ENCODE measurements at regions of chr20 and their contacts with region 1.

Region 1: DNA sequence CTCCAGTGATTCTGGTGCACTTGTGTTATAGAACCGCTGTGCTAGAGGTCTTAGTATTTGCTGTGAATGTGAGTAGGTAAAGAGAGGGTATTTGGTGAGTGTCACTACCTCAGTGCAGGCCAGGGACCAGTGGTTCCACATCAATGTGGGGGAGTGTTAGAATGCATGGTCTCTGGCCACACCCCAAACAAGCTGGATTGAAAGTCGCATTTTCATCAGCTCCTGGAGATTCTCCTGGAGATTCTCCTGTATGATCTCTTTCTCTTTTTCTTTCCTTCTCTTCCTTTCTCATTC is 26.8 kb upstream of the BCAS1 start:
- DNase-seq: no peak
- ATAC-seq: no peak
- H3K4me3 ChIP-seq: no peak overlapping the region
- H3K4me3 Mint-ChIP-seq: no peak overlapping the region
- H3K27ac ChIP-seq: no peak overlapping the region
- H3K27ac Mint-ChIP-seq: no peak overlapping the region
- H3K4me1 ChIP-seq: no peaks in the 10 kb centered on the region
- H3K4me1 Mint-ChIP-seq: no peaks in the 10 kb centered on the region
- H3K27me3 ChIP-seq: no peaks in the 10 kb centered on the region
- H3K27me3 Mint-ChIP-seq: peaks cover 11% of the 10 kb centered on the region
- CTCF ChIP-seq: no peak

Region 2: DNA sequence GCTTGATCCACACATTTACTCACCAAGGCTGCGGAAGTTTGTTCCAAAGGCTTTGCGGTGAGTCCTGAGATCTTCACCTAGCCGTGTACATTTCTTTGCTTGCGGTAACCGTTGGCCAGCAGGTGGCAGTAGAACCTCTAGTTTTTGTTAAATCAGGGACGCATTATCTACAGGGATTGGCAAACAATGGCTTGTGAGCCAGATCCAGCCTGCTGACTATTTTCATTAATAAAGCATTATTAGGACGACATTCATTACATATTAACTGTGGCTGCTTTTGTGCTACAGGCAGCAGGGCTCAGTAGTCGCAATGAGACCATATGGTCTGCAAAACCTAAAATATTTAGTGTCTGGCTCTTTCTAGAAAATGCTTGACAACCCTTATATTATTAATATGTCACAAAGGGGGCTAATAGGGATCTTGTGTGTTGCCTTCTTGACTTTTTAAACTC is 552.4 kb after region 1 on chr20:
- CTCF ChIA-PET with region 1: no interaction called
- POLR2A ChIA-PET with region 1: no interaction called
- intact Hi-C with region 1: loop called in 1 of 2 experiments (anchors 2 kb)
- DNase-seq: peak; percentile 24 to 67 (median 46)
- ATAC-seq: peak; percentile 46
- H3K4me3 ChIP-seq: no peak overlapping the region
- H3K4me3 Mint-ChIP-seq: no peak overlapping the region
- H3K27ac ChIP-seq: no peak overlapping the region
- H3K27ac Mint-ChIP-seq: no peak overlapping the region
- H3K4me1 ChIP-seq: no peaks in the 10 kb centered on the region
- H3K4me1 Mint-ChIP-seq: no peaks in the 10 kb centered on the region
- H3K27me3 ChIP-seq: no peaks in the 10 kb centered on the region
- H3K27me3 Mint-ChIP-seq: peaks cover 15% of the 10 kb centered on the region
- CTCF ChIP-seq: peak; percentile 84